AG04450 (cell line): ENCODE measurements at regions of chr3 and their contacts with region 1.

Region 1: GRCh38 chr3:33074217-33075067 is 22.5 kb downstream of the GLB1 start:
- DNase-seq: peak; percentile 43
- H3K4me3 ChIP-seq: no peak overlapping the region
- H3K27ac ChIP-seq: no peak overlapping the region
- H3K27me3 ChIP-seq: no peaks in the 10 kb centered on the region
- CTCF ChIP-seq: peak; percentile 97

Region 2: GRCh38 chr3:32934150-32934742 is 140.2 kb before region 1 on chr3:
- CTCF ChIA-PET with region 1: interaction called, 15 read pairs
- POLR2A ChIA-PET with region 1: interaction called, 3 read pairs
- DNase-seq: no peak
- H3K4me3 ChIP-seq: no peak overlapping the region
- H3K27ac ChIP-seq: no peak overlapping the region
- H3K27me3 ChIP-seq: peaks cover 2% of the 10 kb centered on the region
- CTCF ChIP-seq: peak; percentile 79

Region 3: DNA sequence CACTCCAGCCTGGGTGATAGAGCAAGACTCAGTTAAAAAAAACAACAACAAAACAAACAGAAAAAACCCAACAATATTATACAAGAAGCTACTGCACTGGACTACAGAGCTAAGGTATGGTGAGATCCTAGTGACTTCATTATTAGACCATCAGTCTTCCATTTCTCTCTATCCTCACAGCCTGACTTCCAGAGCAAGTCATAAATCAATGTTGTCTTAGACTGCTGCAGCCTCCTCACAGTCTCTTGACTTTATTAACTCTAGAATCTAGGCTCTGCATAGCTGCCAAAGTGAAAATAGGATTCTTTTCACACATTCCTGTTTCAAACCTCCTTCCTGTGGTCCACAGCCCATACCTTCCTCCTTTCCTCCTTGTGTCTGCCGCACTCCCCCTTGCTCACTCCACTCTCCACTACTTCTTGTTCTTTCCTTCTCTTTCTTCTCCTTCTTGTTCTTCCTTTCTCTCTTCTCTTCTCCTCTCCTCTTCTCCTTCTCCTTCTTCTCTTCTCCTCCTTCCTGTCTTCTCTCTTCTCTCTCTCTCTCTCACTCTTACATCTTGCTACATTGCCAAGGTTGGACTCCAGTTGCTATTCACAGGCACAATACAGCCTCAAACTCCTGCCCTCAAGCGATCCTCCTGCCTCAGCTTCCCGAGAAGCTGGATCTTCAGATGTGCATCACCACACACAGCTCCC is 73.6 kb before region 1 on chr3:
- CTCF ChIA-PET with region 1: interaction called, 10 read pairs
- POLR2A ChIA-PET with region 1: no interaction called
- DNase-seq: no peak
- H3K4me3 ChIP-seq: no peak overlapping the region
- H3K27ac ChIP-seq: no peak overlapping the region
- H3K27me3 ChIP-seq: no peaks in the 10 kb centered on the region
- CTCF ChIP-seq: no peak

Region 4: GRCh38 chr3:33037471-33037870 is 37.0 kb before region 1 on chr3:
- CTCF ChIA-PET with region 1: interaction called, 21 read pairs
- POLR2A ChIA-PET with region 1: no interaction called
- DNase-seq: no peak
- H3K4me3 ChIP-seq: no peak overlapping the region
- H3K27ac ChIP-seq: no peak overlapping the region
- H3K27me3 ChIP-seq: no peaks in the 10 kb centered on the region
- CTCF ChIP-seq: no peak

Region 5: DNA sequence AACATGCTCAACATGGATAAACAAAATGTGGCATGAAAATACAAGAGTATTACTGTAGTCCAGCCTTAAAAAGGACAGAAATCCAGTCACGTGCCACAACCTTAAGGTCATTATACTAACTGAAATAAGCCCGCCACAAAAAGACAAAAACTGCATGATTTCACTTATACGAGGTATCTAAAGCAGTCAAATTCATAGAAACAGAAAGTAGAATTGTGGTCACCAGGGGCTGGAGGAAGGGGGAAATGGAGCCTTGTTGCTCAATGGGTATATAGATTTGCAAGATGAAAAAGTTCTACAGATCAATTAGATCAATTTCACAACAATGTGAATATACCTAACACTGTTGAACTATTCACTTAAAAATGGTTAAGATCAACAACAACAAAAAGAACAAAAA is 15.1 kb after region 1 on chr3:
- CTCF ChIA-PET with region 1: interaction called, 66 read pairs
- POLR2A ChIA-PET with region 1: no interaction called
- DNase-seq: no peak
- H3K4me3 ChIP-seq: no peak overlapping the region
- H3K27ac ChIP-seq: no peak overlapping the region
- H3K27me3 ChIP-seq: no peaks in the 10 kb centered on the region
- CTCF ChIP-seq: no peak

Region 6: GRCh38 chr3:33372218-33373081 is 298.0 kb after region 1 on chr3:
- CTCF ChIA-PET with region 1: interaction called, 10 read pairs
- POLR2A ChIA-PET with region 1: no interaction called
- DNase-seq: no peak
- H3K4me3 ChIP-seq: no peak overlapping the region
- H3K27ac ChIP-seq: no peak overlapping the region
- H3K27me3 ChIP-seq: no peaks in the 10 kb centered on the region
- CTCF ChIP-seq: peak; percentile 95